ENCODE measurements at regions of chr1 and their contacts with region 1.

Region 1: GRCh38 chr1:19661721-19662228 is 2.9 kb upstream of the HTR6 start:
- DNase-seq: no peak
- H3K4me3 ChIP-seq: no peak overlapping the region
- H3K27ac ChIP-seq: no peak overlapping the region
- H3K27me3 ChIP-seq: peaks cover 38% of the 10 kb centered on the region
- CTCF ChIP-seq: peak; percentile 72

Region 2: GRCh38 chr1:19341201-19342072 is 320.3 kb before region 1 on chr1:
- CTCF ChIA-PET with region 1: interaction called, 45 read pairs
- POLR2A ChIA-PET with region 1: no interaction called
- DNase-seq: peak; percentile 33
- H3K4me3 ChIP-seq: no peak overlapping the region
- H3K27ac ChIP-seq: no peak overlapping the region
- H3K27me3 ChIP-seq: no peaks in the 10 kb centered on the region
- CTCF ChIP-seq: peak; percentile 87

Region 3: DNA sequence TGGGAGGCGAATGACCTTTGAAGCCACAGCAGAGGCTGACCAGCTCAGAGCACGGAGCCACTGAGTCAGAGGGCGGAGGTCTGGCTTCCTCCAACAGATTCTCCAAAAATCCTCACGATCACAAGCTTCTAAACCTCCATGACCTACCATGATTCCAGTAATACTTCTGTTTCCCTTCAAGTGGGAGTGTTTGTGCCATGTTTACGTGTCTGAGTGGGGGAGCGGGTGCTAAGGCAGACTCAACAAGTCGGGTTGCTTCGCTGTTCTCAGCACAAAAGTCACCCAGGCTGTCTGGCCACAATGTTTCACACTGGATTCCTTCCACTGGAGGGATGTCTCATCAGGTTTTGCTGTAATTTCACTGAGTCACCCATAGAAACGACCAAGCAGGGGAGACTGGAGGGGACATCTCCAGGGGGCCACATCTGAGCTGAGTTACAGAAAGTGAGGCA is 263.4 kb before region 1 on chr1:
- CTCF ChIA-PET with region 1: interaction called, 11 read pairs
- POLR2A ChIA-PET with region 1: interaction called, 3 read pairs
- DNase-seq: peak; percentile 90
- H3K4me3 ChIP-seq: no peak overlapping the region
- H3K27ac ChIP-seq: peak overlapping the region; percentile 81
- H3K27me3 ChIP-seq: no peaks in the 10 kb centered on the region
- CTCF ChIP-seq: peak; percentile 73

Region 4: DNA sequence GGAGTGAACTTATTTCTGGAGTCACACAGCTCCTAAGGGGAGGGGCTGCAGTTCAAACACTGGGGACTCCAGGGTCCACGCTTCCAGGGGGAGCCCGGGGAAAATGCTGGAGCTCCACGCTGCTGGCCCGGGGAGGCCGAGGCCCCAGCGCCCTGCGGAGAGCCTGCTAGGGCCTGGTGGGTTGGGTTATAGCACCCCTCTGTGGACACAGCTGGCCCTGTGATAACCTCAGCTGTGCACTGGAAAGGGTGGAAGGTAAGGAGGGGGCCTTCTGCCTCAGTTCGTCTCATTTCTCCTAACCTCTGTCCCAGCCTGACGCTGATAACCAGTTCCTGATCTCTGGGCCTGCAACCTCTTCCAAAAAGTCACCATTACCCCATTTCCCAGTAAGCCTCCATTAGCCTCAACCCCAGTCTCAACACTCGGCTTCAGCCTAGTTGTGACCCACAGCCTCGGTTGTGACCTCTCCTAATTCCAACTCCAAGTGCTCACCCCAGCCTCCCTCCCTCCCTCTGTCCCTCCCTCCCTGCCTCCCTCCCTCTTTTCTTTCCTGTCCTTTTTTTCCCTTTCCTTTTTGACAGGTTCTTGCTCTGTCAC is 10.5 kb before region 1 on chr1:
- CTCF ChIA-PET with region 1: interaction called, 26 read pairs
- POLR2A ChIA-PET with region 1: no interaction called
- DNase-seq: no peak
- H3K4me3 ChIP-seq: no peak overlapping the region
- H3K27ac ChIP-seq: peak overlapping the region; percentile 21
- H3K27me3 ChIP-seq: no peaks in the 10 kb centered on the region
- CTCF ChIP-seq: peak; percentile 83

Region 5: GRCh38 chr1:19676438-19676922 is 14.7 kb after region 1 on chr1:
- CTCF ChIA-PET with region 1: interaction called, 22 read pairs
- POLR2A ChIA-PET with region 1: no interaction called
- DNase-seq: peak; percentile 16
- H3K4me3 ChIP-seq: no peak overlapping the region
- H3K27ac ChIP-seq: no peak overlapping the region
- H3K27me3 ChIP-seq: peaks cover 6% of the 10 kb centered on the region
- CTCF ChIP-seq: no peak

Region 6: GRCh38 chr1:19682257-19682656 is 20.5 kb after region 1 on chr1:
- CTCF ChIA-PET with region 1: interaction called, 18 read pairs
- POLR2A ChIA-PET with region 1: no interaction called
- DNase-seq: peak; percentile 70
- H3K4me3 ChIP-seq: no peak overlapping the region
- H3K27ac ChIP-seq: no peak overlapping the region
- H3K27me3 ChIP-seq: no peaks in the 10 kb centered on the region
- CTCF ChIP-seq: no peak

Region 7: GRCh38 chr1:19704247-19705113 is 42.7 kb after region 1 on chr1:
- CTCF ChIA-PET with region 1: interaction called, 142 read pairs
- POLR2A ChIA-PET with region 1: interaction called, 7 read pairs
- DNase-seq: peak; percentile 33
- H3K4me3 ChIP-seq: no peak overlapping the region
- H3K27ac ChIP-seq: no peak overlapping the region
- H3K27me3 ChIP-seq: no peaks in the 10 kb centered on the region
- CTCF ChIP-seq: peak; percentile 97

Measured in AG04450 (cell line).